Left cardiac atrium (tissue), 4 donors: ENCODE measurements at regions of chr15 and their contacts with region 1.

Region 1: DNA sequence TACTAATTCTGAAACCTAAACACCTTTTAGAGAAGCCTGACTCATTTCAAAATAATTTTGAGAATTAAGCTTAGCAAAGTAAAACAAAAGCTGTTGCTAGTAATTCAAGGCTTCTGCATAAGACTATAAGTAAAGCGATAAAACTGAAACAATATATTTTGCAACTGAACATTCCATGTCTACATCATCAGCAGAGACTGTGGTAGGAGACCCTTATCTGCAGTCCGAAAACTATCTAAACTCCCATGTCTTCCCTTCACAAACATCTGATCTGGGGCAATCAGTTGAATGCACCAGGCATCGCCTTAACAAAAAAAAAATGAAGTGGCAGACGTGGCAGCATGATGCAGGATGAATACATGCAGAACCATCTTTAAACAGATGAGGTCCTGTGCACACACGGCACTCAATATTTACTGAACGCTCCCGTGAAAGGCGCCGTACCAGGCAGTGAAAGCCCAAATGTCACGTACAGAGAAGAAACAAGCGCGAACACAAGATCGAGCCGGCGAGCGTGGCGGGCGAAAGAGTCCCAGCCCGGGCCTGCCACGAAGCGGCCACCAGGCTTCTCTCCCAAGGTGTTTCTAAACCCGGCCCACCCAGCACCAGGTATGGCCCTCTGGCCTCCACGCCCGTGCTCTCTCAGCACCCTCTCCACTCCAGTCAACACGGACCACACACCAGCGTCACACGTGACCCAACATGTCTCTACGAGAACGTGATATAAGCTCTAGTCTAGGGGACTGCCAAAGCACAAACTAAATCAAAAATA is 63.0 kb downstream of the CHSY1 start:
- DNase-seq: peak; percentile 58
- ATAC-seq: peak; percentile 36 to 58

Region 2: GRCh38 chr15:101008158-101009139 is 180.4 kb before region 1 on chr15:
- intact Hi-C with region 1: no loop called
- DNase-seq: peak; percentile 83
- ATAC-seq: peak; percentile 85 to 89

Region 3: DNA sequence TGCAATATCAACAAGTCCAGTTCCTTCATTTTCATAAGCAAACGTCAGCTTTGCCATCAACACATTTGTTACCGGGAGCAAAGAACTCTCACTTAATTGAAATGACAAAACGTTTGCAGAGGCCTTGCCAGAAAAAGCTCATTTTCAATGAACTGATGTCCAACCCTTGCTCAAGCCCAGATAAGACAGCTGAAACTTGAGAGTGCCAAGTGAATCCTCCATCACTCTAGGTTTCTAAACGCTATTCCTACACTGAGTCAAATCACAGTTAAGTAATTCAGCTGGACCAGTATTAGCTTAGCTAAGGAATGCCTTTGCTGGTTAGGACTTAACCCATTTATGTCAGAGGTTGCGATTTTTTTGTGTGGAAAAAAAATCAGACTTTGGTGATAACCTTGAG is 51.5 kb after region 1 on chr15:
- intact Hi-C with region 1: no loop called
- DNase-seq: no peak
- ATAC-seq: peak; percentile 31 to 85

Region 4: DNA sequence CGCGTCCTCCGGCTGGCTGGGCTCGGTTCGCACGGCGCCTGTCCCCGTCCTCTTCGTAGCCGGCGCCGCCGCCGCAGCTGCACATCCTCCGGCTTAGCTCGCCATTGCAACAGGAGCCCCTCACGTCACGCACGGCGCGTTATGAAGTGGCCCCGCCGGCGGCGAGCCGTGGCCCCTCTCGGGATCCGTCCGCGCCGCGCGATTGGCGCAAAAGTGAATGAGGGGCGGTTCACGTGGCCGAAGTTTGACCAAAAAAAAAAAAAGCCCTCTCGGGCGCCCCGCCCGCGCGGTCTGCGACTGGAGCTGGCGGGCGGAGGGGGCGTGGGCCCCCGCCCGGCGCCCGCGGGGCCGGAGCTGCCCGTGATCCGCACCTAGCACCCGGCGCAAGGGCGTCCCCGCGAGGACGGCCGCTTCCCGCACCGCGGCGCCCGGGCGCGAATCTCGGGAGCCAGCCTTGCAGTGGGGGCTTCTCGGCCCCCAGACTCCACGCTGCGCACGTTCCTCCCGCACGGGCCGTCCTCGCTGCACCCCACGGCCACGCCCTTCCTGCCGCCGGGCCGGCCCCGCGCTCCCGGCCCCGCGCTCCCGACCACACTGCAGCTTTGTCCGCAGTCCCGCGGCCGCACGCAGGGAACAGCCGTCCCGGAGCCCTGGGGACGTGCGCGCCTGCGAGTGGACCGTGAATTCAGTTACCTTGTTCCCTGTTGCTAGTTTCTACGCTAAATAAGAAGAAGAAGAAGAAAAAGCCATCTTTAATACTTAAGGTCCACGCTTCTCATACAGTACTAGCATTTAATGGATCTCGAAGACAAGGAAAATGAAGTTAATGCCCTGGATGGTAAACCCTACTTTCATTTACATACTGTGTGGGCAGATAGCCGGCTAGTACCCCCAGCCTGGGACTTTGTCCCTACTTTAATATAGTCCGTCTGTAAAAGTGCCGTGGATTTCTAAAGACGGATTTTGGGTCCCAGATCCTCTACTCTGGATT is 63.3 kb after region 1 on chr15 and contains the start of gene CHSY1:
- intact Hi-C with region 1: loop called in 1 of 2 experiments (anchors 5 kb)
- DNase-seq: peak; percentile 96
- ATAC-seq: peak; percentile 91 to 93
- total RNA-seq, gene CHSY1: 18.8 to 42.0 TPM